Activated T-helper 2 cell treated with anti-CD3 and anti-CD28 coated beads, Interferon-gamma antibody, Interleukin-2, Interleukin-4, amounts not matched to agents 10 μg/mL and 5 μg/mL and 100 μg/mL, durations not matched to agents 14 hours and 24 hours and 36 hours (primary cell): ENCODE measurements at regions of chr2 and their contacts with region 1.

Region 1: DNA sequence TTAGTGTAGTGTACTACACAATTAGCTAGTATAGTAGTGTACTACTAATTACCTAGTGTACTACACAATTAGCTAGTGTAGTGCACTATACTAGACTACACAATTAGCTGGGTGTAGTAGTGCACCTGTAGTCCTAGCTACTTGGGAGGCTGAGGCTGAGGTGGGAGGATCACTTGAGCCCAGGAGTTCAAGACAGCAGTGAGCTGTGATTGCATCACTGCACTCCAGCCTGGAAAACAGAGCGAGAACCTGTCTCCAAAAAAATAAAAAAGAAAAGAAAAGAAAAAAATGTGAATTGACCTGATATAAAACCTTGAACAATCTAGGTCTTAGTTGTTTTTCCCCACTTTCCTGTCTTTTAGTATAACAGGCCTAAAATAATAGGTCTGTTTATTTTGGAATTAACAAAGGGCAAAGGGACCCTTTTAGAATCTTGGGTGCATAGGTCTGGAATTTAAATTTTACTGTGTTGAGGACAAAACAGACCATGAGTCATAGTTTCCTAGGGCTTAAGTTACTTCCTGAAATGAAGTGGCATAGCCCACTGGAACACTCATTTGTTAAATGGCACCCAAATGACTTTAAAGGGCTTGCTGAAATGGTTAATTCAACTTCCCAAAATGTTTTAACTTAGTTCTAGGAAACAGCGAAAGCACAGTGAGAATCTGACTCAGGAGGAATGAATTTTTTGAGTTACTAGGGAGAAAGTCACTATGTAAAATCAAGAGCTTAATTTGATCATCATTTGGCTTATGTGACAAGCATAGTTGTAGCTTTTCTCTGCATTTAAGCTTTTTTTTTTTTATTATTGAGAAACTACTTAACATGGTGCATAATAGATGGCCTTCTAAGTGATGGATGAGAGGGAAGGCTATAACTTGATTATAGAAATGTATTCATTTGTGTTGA is 50.7 kb upstream of the ARL5A start:
- DNase-seq: no peak
- H3K4me3 Mint-ChIP-seq: no peak overlapping the region
- H3K27ac Mint-ChIP-seq: peak overlapping the region; percentile 12
- H3K4me1 Mint-ChIP-seq: peaks cover 7% of the 10 kb centered on the region
- H3K27me3 Mint-ChIP-seq: no peaks in the 10 kb centered on the region

Region 2: GRCh38 chr2:151819920-151820319 is 59.0 kb before region 1 on chr2:
- intact Hi-C with region 1: loop called (anchors 1 kb)
- DNase-seq: no peak
- H3K4me3 Mint-ChIP-seq: no peak overlapping the region
- H3K27ac Mint-ChIP-seq: peak overlapping the region; percentile 33
- H3K4me1 Mint-ChIP-seq: peaks cover 38% of the 10 kb centered on the region
- H3K27me3 Mint-ChIP-seq: no peaks in the 10 kb centered on the region

Region 3: DNA sequence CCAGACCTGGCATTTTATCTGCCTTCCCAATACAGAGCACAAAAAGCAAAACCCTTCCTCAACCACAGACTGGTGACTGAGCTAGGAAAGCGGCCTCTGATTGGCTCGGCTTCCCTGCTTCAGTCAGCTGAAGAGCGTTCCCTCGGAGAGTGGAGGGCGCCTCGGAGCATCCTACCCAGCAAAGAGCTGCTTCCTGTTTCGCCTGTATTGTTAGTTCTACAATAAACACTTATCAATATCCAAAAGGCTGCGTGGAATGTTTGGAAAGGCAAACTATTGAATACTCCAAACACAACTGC is 94.9 kb after region 1 on chr2:
- intact Hi-C with region 1: loop called (anchors 2 kb)
- DNase-seq: no peak
- H3K4me3 Mint-ChIP-seq: no peak overlapping the region
- H3K27ac Mint-ChIP-seq: no peak overlapping the region
- H3K4me1 Mint-ChIP-seq: peaks cover 24% of the 10 kb centered on the region
- H3K27me3 Mint-ChIP-seq: peaks cover 2% of the 10 kb centered on the region